HCT116 (cell line): ENCODE measurements at regions of chr1 and their contacts with region 1.

Region 1: GRCh38 chr1:108512239-108512981 is 47.5 kb upstream of the EEIG2 start:
- DNase-seq: peak; percentile 15
- ATAC-seq: peak; percentile 79
- H3K4me3 ChIP-seq: no peak overlapping the region
- H3K27ac ChIP-seq: no peak overlapping the region
- H3K4me1 ChIP-seq: no peaks in the 10 kb centered on the region
- H3K27me3 ChIP-seq: no peaks in the 10 kb centered on the region
- CTCF ChIP-seq: peak; percentile 72 to 80 (median 75)
- POLR2A ChIP-seq: no peak
- RAD21 ChIP-seq: peak; percentile 89

Region 2: DNA sequence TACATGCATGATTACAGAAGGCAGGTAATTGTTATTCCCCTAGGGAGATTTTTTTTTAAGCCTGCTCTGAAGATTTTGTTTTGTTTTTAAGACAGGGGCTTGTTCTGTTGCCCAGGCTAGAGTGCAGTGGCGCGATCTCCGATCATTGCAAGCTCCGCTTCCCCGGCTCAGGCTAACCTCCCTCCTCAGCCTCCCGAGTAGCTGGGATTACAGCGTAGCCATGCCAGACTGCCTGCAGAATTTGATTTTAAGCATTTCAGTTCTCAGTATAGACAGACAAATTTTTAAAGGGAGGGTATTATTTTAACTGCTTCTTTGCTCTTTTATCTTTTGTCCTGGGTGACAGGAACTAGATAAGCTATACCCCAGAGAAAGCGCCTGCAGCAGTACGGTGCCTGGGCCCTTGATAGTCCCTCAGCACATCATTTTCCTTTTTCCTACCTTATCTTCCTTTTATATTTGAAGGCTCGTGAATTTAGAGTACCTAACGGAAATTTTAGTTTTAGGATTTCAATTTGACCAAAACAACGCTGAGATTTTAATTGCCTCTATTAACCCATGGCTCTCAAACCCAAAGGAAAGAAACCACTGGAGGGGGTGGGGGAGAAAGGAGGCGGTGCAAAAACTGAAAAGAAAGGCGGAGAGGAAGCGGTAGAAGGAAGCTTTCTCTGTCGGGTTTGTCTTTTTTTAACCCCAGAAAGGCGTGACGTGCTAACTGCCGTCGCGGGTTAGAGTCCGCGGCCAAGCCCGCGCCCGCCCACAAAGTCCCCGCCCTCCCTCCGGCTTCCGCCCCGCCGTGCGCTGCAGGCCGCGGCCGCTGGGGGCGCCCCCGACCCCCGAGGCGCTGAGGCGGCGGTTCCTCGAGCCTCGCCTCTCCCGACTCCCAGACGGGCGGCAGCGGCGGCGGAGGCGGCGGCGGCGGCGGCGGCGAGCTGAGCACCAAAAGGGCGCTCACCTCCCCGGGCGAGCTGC is 47.1 kb after region 1 on chr1 and contains the start of gene EEIG2:
- CTCF ChIA-PET with region 1: interaction called, 52 read pairs
- POLR2A ChIA-PET with region 1: interaction called, 8 read pairs
- RAD21 ChIA-PET with region 1: no interaction called
- intact Hi-C with region 1: loop called (anchors 1 kb)
- DNase-seq: peak; percentile 69
- ATAC-seq: peak; percentile 83
- H3K4me3 ChIP-seq: peak within 1 kb of the TSS; percentile 64 to 70
- H3K27ac ChIP-seq: peak within 1 kb of the TSS; percentile 48; the same call in 1 of the 2 replicates
- H3K4me1 ChIP-seq: peaks cover 11 to 23% of the 10 kb centered on the region in 2 experiments
- H3K27me3 ChIP-seq: no peaks in the 10 kb centered on the region
- CTCF ChIP-seq: peak; percentile 32 to 63 (median 62); a peak in 5 of 6 replicates
- POLR2A ChIP-seq: no peak
- RAD21 ChIP-seq: no peak
- total RNA-seq, gene EEIG2: 16.0 TPM

Region 3: GRCh38 chr1:108643492-108644335 is 131.3 kb after region 1 on chr1:
- CTCF ChIA-PET with region 1: interaction called, 21 read pairs
- POLR2A ChIA-PET with region 1: no interaction called
- RAD21 ChIA-PET with region 1: interaction called, 4 to 6 read pairs
- intact Hi-C with region 1: loop called (anchors 2 kb)
- DNase-seq: peak; percentile 15
- ATAC-seq: peak; percentile 71
- H3K4me3 ChIP-seq: no peak overlapping the region
- H3K27ac ChIP-seq: no peak overlapping the region
- H3K4me1 ChIP-seq: peaks cover 0 to 6% of the 10 kb centered on the region in 2 experiments; a peak in 1 of 4 replicates
- H3K27me3 ChIP-seq: peaks cover 3% of the 10 kb centered on the region; the same call in 1 of the 2 replicates
- CTCF ChIP-seq: peak; percentile 27 to 47 (median 33); a peak in 3 of 6 replicates
- POLR2A ChIP-seq: no peak
- RAD21 ChIP-seq: peak; percentile 62

Region 4: DNA sequence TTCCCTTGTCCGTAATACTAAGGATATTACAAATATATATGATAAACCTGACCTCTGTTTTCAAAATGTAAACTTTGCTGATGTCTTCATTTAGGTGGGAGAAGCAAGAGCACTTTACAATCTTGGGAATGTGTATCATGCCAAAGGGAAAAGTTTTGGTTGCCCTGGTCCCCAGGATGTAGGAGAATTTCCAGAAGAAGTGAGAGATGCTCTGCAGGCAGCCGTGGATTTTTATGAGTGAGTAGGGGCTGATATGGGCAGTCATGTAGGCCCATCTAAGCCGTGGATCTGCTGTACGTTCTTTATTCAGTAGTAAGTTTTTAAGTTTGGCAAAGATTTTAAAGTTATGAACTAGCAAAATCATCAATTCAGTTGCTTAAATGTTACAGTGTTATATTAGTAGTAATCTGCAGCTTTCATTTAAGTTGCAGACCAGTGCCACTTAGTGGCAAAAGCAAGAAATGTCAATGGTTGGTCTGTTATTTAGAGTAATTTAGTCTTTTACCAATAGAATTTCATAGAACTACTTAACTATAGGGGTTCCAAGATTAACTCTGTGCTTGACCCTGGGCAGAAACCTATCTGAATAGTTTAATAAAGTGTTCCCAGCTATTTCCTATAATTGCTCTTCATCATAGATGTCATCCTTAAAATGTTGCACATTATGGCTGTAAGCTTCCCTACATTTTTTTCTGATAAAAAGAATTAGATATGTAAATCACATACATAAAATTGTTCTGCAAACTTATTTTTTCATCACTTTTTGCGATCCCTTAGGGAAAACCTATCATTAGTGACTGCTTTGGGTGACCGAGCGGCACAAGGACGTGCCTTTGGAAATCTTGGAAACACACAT is 385.7 kb after region 1 on chr1:
- CTCF ChIA-PET with region 1: interaction called, 6 read pairs
- POLR2A ChIA-PET with region 1: no interaction called
- RAD21 ChIA-PET with region 1: no interaction called
- intact Hi-C with region 1: loop called (anchors 1 kb)
- DNase-seq: peak; percentile 40
- ATAC-seq: peak; percentile 81
- H3K4me3 ChIP-seq: no peak overlapping the region
- H3K27ac ChIP-seq: no peak overlapping the region
- H3K4me1 ChIP-seq: no peaks in the 10 kb centered on the region
- H3K27me3 ChIP-seq: no peaks in the 10 kb centered on the region
- CTCF ChIP-seq: peak; percentile 54 to 79 (median 71)
- POLR2A ChIP-seq: no peak
- RAD21 ChIP-seq: peak; percentile 78

Region 5: DNA sequence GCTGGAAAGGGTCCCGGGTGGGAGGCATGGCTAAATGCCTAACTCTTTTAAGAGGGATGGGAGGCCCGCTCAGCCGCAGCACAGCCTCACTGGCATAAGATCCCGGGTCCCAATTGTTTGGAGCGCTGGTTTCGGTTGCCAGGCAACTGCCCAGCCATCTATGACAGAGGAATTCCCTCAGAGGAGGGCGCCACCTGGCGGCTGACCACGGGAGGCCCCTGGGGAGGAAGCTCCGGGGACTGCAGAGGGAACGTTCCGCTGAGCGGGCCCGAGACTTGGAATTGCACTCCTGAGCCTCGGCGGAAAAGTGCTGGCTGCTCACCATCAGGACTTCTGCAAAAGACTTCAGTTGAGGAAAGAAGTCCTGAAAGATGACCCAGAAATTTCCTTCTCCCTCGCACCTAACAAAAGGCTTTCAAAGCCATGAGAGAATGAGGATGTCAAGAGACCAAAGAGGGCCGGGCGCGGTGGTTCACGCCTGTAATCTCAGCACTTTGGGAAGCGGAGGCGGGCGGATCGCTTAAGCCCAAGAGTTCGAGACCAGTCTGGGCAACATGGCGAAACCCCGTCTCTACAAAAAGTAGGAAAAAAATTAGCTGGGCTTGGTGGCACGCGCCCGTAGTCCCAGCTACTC is 600.4 kb after region 1 on chr1:
- CTCF ChIA-PET with region 1: interaction called, 4 read pairs
- POLR2A ChIA-PET with region 1: no interaction called
- RAD21 ChIA-PET with region 1: no interaction called
- intact Hi-C with region 1: loop called (anchors 1 kb)
- DNase-seq: peak; percentile 80
- ATAC-seq: peak; percentile 97
- H3K4me3 ChIP-seq: no peak overlapping the region
- H3K27ac ChIP-seq: no peak overlapping the region
- H3K4me1 ChIP-seq: peaks cover 3 to 16% of the 10 kb centered on the region in 2 experiments; a peak in 3 of 4 replicates
- H3K27me3 ChIP-seq: no peaks in the 10 kb centered on the region
- CTCF ChIP-seq: peak; percentile 79 to 96 (median 96)
- POLR2A ChIP-seq: no peak
- RAD21 ChIP-seq: peak; percentile 82